ENCODE measurements at regions of chr10 and their contacts with region 1.

Region 1: DNA sequence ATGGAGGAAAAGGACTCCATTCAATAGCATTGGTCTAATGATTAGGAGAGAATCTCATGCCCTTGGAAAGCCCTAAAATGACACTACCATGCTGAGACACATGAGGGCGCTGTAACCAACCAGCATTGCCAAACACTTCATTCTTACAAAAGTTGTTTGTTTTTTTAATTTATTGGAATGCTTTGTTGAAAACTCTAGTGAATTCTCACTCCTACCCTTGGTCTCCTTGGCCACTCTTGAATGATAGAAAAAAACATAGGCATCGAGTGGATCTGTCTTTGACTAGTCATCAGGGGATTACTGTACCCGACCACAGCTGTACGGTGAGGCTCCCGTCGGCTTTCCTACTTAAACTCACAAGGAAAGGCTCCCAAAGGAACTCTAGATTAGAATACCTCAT is 29.3 kb upstream of the ADD3 start:
- DNase-seq: peak; percentile 79
- ATAC-seq: peak; percentile 75
- H3K4me3 Mint-ChIP-seq: no peak overlapping the region
- H3K27ac Mint-ChIP-seq: peak overlapping the region; percentile 6
- H3K4me1 Mint-ChIP-seq: peaks cover 9% of the 10 kb centered on the region
- H3K27me3 Mint-ChIP-seq: no peaks in the 10 kb centered on the region

Region 2: GRCh38 chr10:109939315-109939961 is 39.0 kb before region 1 on chr10:
- CTCF ChIA-PET with region 1: interaction called, 10 read pairs
- POLR2A ChIA-PET with region 1: no interaction called
- intact Hi-C with region 1: no loop called
- DNase-seq: no peak
- ATAC-seq: peak; percentile 16
- H3K4me3 Mint-ChIP-seq: no peak overlapping the region
- H3K27ac Mint-ChIP-seq: peak overlapping the region; percentile 20
- H3K4me1 Mint-ChIP-seq: peaks cover 48% of the 10 kb centered on the region
- H3K27me3 Mint-ChIP-seq: no peaks in the 10 kb centered on the region

Region 3: GRCh38 chr10:110059925-110060324 is 81.4 kb after region 1 on chr10:
- CTCF ChIA-PET with region 1: interaction called, 12 read pairs
- POLR2A ChIA-PET with region 1: no interaction called
- intact Hi-C with region 1: no loop called
- DNase-seq: no peak
- ATAC-seq: no peak
- H3K4me3 Mint-ChIP-seq: no peak overlapping the region
- H3K27ac Mint-ChIP-seq: peak overlapping the region; percentile 81
- H3K4me1 Mint-ChIP-seq: peaks cover 82% of the 10 kb centered on the region
- H3K27me3 Mint-ChIP-seq: no peaks in the 10 kb centered on the region

Region 4: DNA sequence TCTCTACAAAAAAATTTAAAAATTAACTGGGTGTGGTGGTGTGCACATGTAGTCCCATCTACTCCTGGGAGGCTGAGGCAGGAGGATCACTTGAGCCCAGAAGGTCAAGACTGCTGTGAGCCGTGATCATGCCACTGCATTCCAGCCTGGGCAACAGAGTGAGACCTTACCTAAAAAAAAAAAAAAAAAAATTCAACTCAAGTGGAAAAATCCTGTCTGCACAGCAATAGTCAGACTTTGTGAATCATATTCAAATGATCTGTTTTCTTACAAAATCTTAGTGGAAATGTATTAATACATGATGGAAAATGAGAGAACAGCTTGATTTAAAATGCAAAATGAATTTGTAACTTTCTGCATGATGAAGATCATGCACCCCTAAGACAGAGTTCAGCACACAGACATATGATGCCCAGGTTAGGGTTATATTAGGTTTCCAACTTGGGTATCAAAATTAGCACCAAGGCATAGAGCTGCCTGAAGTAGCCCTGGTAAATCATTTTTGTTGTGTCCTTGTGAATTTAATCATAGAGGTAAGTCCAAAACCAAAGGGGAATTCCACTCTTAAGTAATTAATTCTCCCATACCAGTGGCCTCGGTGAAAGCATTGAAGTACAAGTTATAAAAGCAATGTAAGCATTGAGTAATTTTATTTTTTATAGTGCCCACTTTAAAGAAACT is 123.1 kb after region 1 on chr10:
- CTCF ChIA-PET with region 1: interaction called, 19 read pairs
- POLR2A ChIA-PET with region 1: no interaction called
- intact Hi-C with region 1: no loop called
- DNase-seq: peak; percentile 32
- ATAC-seq: peak; percentile 78
- H3K4me3 Mint-ChIP-seq: peak overlapping the region; percentile 2
- H3K27ac Mint-ChIP-seq: peak overlapping the region; percentile 84
- H3K4me1 Mint-ChIP-seq: peaks cover 71% of the 10 kb centered on the region
- H3K27me3 Mint-ChIP-seq: no peaks in the 10 kb centered on the region

Region 5: GRCh38 chr10:110110338-110110737 is 131.9 kb after region 1 on chr10:
- CTCF ChIA-PET with region 1: interaction called, 19 read pairs
- POLR2A ChIA-PET with region 1: no interaction called
- intact Hi-C with region 1: no loop called
- DNase-seq: peak; percentile 31
- ATAC-seq: peak; percentile 81
- H3K4me3 Mint-ChIP-seq: no peak overlapping the region
- H3K27ac Mint-ChIP-seq: peak overlapping the region; percentile 53
- H3K4me1 Mint-ChIP-seq: peaks cover 31% of the 10 kb centered on the region
- H3K27me3 Mint-ChIP-seq: no peaks in the 10 kb centered on the region

Region 6: DNA sequence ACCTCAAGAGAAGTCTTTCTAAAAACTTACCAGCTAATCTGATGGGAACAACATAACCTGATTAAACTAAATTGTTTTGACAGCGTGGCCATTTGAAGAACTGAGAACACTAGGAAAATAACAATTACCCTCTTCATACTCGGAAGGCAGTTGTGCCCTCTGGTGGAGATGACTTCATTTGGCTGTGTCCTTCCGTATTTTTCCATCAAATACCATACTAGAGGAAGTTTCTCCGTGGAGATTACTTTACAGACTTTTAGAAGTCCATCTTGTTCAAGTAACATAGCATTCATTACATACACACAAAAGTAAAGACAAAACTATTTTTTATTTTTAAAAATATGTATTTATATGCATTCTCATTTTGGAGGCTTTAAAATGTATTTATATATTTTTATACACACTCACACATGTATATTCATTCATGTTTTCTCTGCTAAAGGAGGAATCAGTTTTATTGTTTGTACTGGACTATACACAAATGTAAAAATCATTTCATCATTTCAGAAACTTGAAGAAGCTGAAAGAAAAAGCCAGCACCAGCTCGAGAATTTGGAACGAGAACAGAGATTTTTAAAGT is 301.0 kb after region 1 on chr10:
- CTCF ChIA-PET with region 1: no interaction called
- POLR2A ChIA-PET with region 1: no interaction called
- intact Hi-C with region 1: loop called in 1 of 2 experiments (anchors 5 kb)
- DNase-seq: peak; percentile 60
- ATAC-seq: peak; percentile 51
- H3K4me3 Mint-ChIP-seq: no peak overlapping the region
- H3K27ac Mint-ChIP-seq: no peak overlapping the region
- H3K4me1 Mint-ChIP-seq: peaks cover 23% of the 10 kb centered on the region
- H3K27me3 Mint-ChIP-seq: no peaks in the 10 kb centered on the region

Measured in activated CD4-positive, alpha-beta T cell treated with anti-CD3 and anti-CD28 coated beads for 36 hours (primary cell).